PC-3 (cell line): ENCODE measurements at regions of chr2 and their contacts with region 1.

Region 1: DNA sequence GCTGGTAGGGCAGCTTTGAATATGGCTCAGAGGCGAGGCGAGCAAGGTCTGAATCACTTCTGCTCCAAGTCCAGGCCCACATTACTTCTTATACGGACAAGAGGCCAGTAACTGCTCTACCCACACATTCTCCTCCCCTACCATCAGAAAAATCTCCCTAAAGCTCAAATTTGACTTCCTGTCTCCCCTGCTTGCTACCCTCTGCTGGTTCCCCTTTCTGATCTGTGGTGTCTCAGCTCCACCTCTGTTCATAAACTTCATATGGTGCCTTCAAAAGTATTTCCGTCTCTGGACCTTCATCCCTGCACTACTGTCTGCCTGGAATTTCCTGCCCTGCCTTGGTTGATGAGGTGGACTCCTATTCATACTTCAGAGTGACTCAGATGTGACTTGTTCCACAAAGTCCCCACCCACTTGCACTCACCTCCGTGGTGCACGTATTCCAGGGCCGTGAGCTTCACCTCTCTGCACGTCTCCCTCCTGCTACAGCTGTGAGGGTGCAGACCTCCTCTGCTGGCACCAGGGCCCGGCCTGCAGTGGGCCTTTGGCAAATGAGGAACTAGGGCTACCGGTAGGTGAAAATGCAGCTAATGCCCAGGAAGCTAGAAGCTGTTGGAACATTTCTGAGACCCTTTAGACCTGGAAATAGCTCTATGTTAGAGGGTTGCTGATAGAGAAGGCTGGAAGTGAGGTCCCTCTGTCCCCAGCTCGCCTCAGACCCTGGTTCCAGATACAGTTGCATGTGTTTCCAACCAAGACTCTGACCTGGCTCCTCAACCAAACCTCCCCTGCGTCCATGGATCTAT is 24.6 kb upstream of the KCMF1 start:
- DNase-seq: peak; percentile 98
- ATAC-seq: peak; percentile 94
- H3K4me3 ChIP-seq: peak overlapping the region; percentile 47
- H3K27ac ChIP-seq: peak overlapping the region; percentile 100
- H3K4me1 ChIP-seq: peaks cover 29% of the 10 kb centered on the region
- H3K27me3 ChIP-seq: no peaks in the 10 kb centered on the region
- CTCF ChIP-seq: 0 out of 2 replicates have a peak, but pooled peaks have one; percentile 22

Region 2: DNA sequence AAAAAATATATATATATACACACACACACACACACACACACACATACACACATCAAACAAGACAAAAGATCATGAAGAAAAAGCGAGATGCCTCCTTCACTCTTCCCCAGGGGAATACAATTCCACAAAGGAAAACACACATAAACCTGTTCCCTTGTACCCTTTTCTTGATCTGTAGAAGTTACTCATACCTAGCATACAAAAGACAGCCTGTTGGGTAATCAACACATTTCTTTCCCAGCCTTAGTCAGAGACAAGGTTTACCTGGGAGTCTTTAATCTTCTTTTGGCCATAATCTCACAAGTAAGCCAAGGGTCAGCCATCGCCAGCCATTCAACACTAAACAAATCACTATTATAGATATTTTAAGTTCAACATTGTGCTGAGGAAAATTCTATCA is 894.4 kb before region 1 on chr2:
- CTCF ChIA-PET with region 1: no interaction called
- POLR2A ChIA-PET with region 1: no interaction called
- intact Hi-C with region 1: no loop called
- DNase-seq: no peak
- ATAC-seq: no peak
- H3K4me3 ChIP-seq: no peak overlapping the region
- H3K27ac ChIP-seq: no peak overlapping the region
- H3K4me1 ChIP-seq: no peaks in the 10 kb centered on the region
- H3K27me3 ChIP-seq: no peaks in the 10 kb centered on the region
- CTCF ChIP-seq: no peak

Region 3: DNA sequence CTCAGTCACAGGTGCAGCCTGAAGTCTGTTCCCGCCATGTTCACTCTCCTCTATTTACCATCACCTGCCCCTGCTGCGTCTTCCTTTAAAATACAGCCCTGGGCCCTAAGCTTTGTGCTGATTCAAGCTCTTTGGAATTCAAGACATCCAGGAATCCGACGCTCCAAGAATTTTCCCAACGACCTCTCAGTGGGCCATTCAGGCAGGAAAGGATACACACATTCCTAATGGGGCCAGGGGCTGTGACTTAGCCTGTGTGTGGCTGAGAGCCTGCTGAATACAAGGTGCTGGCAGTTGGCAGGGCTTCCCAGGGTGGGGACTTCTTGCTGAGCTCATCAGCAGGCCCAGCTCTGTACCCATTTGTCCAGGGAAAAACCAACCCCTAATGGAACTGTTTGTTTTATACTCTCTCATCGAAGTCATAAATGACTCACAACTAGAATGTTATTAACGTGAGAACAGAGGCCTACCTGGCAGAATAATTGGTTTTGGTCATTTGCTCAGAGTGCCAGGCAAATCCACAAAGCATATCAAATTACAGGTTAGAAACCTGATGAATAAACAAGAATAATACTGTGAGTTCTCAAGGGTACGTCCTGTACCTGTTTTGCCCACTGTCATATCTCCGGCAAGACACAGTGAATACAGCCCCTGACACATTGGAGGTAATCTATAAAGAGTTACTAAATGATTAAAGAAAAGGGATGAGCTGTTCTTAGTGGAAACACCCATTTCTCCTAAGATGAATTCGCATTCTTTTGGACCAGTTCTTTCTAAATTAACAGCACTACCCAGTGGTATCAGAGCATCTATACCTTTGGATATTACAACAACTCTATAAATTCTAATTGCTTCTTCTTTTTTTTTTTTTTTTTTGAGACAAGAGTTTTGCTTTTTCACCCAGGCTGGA is 12.0 kb after region 1 on chr2:
- CTCF ChIA-PET with region 1: interaction called, 16 read pairs
- POLR2A ChIA-PET with region 1: interaction called, 45 read pairs
- intact Hi-C with region 1: loop called (anchors 2 kb)
- DNase-seq: peak; percentile 99
- ATAC-seq: peak; percentile 92
- H3K4me3 ChIP-seq: peak overlapping the region; percentile 41; the same call in 1 of the 2 replicates
- H3K27ac ChIP-seq: peak overlapping the region; percentile 99
- H3K4me1 ChIP-seq: peaks cover 42% of the 10 kb centered on the region
- H3K27me3 ChIP-seq: no peaks in the 10 kb centered on the region
- CTCF ChIP-seq: no peak

Region 4: GRCh38 chr2:85009019-85009618 is 62.7 kb after region 1 on chr2:
- CTCF ChIA-PET with region 1: no interaction called
- POLR2A ChIA-PET with region 1: no interaction called
- intact Hi-C with region 1: no loop called
- DNase-seq: no peak
- ATAC-seq: no peak
- H3K4me3 ChIP-seq: no peak overlapping the region
- H3K27ac ChIP-seq: no peak overlapping the region
- H3K4me1 ChIP-seq: peaks cover 15% of the 10 kb centered on the region
- H3K27me3 ChIP-seq: no peaks in the 10 kb centered on the region
- CTCF ChIP-seq: no peak

Region 5: GRCh38 chr2:85106507-85107215 is 160.3 kb after region 1 on chr2:
- CTCF ChIA-PET with region 1: no interaction called
- POLR2A ChIA-PET with region 1: interaction called, 11 read pairs
- intact Hi-C with region 1: no loop called
- DNase-seq: peak; percentile 95
- ATAC-seq: peak; percentile 65
- H3K4me3 ChIP-seq: no peak overlapping the region
- H3K27ac ChIP-seq: no peak overlapping the region
- H3K4me1 ChIP-seq: peaks cover 5% of the 10 kb centered on the region
- H3K27me3 ChIP-seq: no peaks in the 10 kb centered on the region
- CTCF ChIP-seq: no peak